ENCODE measurements at regions of chr16 and their contacts with region 1.

Region 1: DNA sequence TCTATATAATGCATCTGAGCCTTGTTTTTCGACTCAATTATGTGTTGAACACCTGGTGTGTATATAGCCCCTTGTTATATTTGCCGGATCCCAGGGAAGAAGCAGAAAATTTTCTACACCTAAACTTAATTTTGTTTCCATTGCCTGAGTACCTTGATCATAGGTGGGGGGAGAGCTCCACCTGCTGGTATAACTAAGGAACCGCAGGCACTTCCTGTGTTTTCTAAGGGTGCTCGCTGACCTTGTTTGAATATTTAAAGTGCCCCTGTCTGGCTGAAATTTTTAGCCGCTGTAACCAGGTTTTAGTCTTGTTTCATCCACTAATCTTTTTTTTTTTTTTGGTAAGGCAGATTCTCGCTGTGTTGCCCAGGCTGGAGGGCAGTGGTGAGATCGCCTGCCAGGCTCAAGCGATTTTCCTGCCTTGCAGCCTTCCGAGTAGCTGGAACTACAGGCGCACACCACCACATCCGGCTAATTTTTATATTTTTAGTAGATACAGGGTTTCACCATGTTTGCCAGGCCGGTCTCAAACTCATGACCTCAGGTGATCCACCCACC is 6.5 kb upstream of the NUBP1 start:
- DNase-seq: peak; percentile 51 to 88 (median 64)
- ATAC-seq: peak; percentile 92
- H3K4me3 ChIP-seq: peak overlapping the region; percentile 24
- H3K4me3 Mint-ChIP-seq: peak overlapping the region; percentile 67
- H3K27ac ChIP-seq: no peak overlapping the region
- H3K27ac Mint-ChIP-seq: peak overlapping the region; percentile 66
- H3K4me1 ChIP-seq: peaks cover 14% of the 10 kb centered on the region
- H3K4me1 Mint-ChIP-seq: peaks cover 6% of the 10 kb centered on the region
- H3K27me3 ChIP-seq: no peaks in the 10 kb centered on the region
- H3K27me3 Mint-ChIP-seq: no peaks in the 10 kb centered on the region
- CTCF ChIP-seq: peak; percentile 89

Region 2: DNA sequence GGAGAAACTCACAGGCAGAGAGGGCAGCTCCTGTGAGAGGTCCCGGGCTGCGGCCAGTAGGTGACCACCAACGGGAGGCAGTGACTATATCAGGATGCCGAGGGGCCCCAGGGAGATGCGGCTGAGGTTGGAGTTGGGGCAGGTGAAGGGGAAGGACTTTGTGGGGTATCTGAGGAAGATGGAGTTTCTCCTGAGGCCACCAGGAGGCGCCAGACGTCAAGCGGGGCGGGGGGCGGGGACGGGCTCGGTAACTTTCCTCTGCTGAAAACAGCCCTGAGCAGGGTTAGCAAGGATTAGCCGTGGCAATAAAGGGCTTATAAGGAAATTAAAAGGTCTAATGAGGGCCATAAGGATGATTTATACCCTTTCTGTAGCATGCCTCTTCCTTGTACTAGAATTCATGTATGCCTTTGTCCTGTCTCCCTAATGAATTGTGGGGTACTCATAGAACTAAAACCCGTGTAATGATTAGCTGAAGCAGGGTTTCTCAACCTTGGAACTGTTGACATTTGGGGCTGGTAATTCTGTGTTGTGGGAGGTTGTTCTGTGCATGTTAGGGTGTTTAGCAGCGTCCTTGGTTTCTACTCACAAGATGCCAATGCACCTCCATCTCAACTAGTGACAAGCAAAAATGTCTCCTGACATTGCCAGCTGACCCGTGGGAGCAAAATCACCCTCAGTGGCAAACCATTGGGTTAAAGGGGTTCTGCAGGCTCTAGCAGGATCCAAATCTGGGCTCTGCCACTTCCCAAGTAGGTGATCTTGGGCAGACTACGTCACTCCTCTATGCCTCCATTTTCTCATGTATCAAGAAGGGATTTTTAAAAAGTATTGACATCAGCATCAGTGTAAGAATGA is 480.1 kb before region 1 on chr16:
- CTCF ChIA-PET with region 1: interaction called, 3 read pairs
- POLR2A ChIA-PET with region 1: no interaction called
- intact Hi-C with region 1: loop called in 1 of 2 experiments (anchors 2 kb)
- DNase-seq: peak; percentile 11 to 77 (median 31)
- ATAC-seq: no peak
- H3K4me3 ChIP-seq: no peak overlapping the region
- H3K4me3 Mint-ChIP-seq: no peak overlapping the region
- H3K27ac ChIP-seq: no peak overlapping the region
- H3K27ac Mint-ChIP-seq: no peak overlapping the region
- H3K4me1 ChIP-seq: peaks cover 6% of the 10 kb centered on the region
- H3K4me1 Mint-ChIP-seq: peaks cover 11% of the 10 kb centered on the region
- H3K27me3 ChIP-seq: peaks cover 0 to 3% of the 10 kb centered on the region in 2 experiments
- H3K27me3 Mint-ChIP-seq: peaks cover 11% of the 10 kb centered on the region
- CTCF ChIP-seq: peak; percentile 68

Region 3: DNA sequence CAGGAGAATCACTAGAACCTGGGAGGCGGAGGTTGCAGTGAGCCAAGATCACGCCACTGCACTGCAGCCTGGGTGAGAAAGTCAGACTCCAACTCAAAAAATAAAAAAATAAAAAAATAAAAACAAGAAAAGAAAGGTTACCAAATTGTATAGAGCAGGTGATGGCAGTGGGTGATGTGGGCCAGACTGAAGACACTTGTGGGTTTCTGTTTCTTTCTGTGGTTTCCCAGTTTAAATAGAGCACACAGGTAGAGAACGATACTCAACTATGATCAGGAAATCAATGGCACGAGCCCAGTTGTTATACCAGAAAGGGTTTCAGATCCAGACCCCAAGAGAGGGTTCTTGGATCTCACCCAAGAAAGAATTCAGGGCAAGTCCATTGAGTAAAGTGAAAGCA is 39.1 kb after region 1 on chr16:
- CTCF ChIA-PET with region 1: no interaction called
- POLR2A ChIA-PET with region 1: no interaction called
- intact Hi-C with region 1: no loop called
- DNase-seq: peak in 3 of 14 experiments; percentile 23 to 42 (median 35)
- ATAC-seq: peak; percentile 39
- H3K4me3 ChIP-seq: no peak overlapping the region
- H3K4me3 Mint-ChIP-seq: no peak overlapping the region
- H3K27ac ChIP-seq: no peak overlapping the region
- H3K27ac Mint-ChIP-seq: no peak overlapping the region
- H3K4me1 ChIP-seq: no peaks in the 10 kb centered on the region
- H3K4me1 Mint-ChIP-seq: peaks cover 3% of the 10 kb centered on the region
- H3K27me3 ChIP-seq: no peaks in the 10 kb centered on the region
- H3K27me3 Mint-ChIP-seq: peaks cover 4% of the 10 kb centered on the region
- CTCF ChIP-seq: no peak

Region 4: GRCh38 chr16:10828851-10829731 is 91.9 kb after region 1 on chr16:
- CTCF ChIA-PET with region 1: no interaction called
- POLR2A ChIA-PET with region 1: no interaction called
- intact Hi-C with region 1: no loop called
- DNase-seq: peak in 2 of 14 experiments; percentile 39 to 57
- ATAC-seq: no peak
- H3K4me3 ChIP-seq: no peak overlapping the region
- H3K4me3 Mint-ChIP-seq: no peak overlapping the region
- H3K27ac ChIP-seq: no peak overlapping the region
- H3K27ac Mint-ChIP-seq: no peak overlapping the region
- H3K4me1 ChIP-seq: no peaks in the 10 kb centered on the region
- H3K4me1 Mint-ChIP-seq: no peaks in the 10 kb centered on the region
- H3K27me3 ChIP-seq: no peaks in the 10 kb centered on the region
- H3K27me3 Mint-ChIP-seq: peaks cover 2% of the 10 kb centered on the region
- CTCF ChIP-seq: no peak

Measured in CD4-positive, alpha-beta T cell (primary cell).